CD8-positive, alpha-beta T cell (primary cell): ENCODE measurements at regions of chr10 and their contacts with region 1.

Region 1: GRCh38 chr10:75226656-75227055 is 9.1 kb downstream of the COMTD1 start:
- DNase-seq: no peak
- ATAC-seq: no peak
- H3K4me3 ChIP-seq: no peak overlapping the region
- H3K4me3 Mint-ChIP-seq: no peak overlapping the region
- H3K27ac ChIP-seq: no peak overlapping the region
- H3K27ac Mint-ChIP-seq: peak overlapping the region; percentile 85
- H3K4me1 ChIP-seq: peaks cover 31% of the 10 kb centered on the region
- H3K4me1 Mint-ChIP-seq: peaks cover 67% of the 10 kb centered on the region
- H3K27me3 ChIP-seq: no peaks in the 10 kb centered on the region
- H3K27me3 Mint-ChIP-seq: no peaks in the 10 kb centered on the region
- CTCF ChIP-seq: no peak

Region 2: GRCh38 chr10:75210282-75211006 is 16.2 kb before region 1 on chr10 and contains the start of gene VDAC2:
- CTCF ChIA-PET with region 1: interaction called, 115 read pairs
- POLR2A ChIA-PET with region 1: interaction called, 55 read pairs
- intact Hi-C with region 1: loop called (anchors 1 kb)
- DNase-seq: peak; percentile 93 to 99 (median 96)
- ATAC-seq: peak; percentile 89
- H3K4me3 ChIP-seq: peak within 1 kb of the TSS; percentile 90 to 93
- H3K4me3 Mint-ChIP-seq: peak within 1 kb of the TSS; percentile 97
- H3K27ac ChIP-seq: peak within 1 kb of the TSS; percentile 99 to 100
- H3K27ac Mint-ChIP-seq: peak within 1 kb of the TSS; percentile 100
- H3K4me1 ChIP-seq: peaks cover 28% of the 10 kb centered on the region
- H3K4me1 Mint-ChIP-seq: peaks cover 26% of the 10 kb centered on the region
- H3K27me3 ChIP-seq: no peaks in the 10 kb centered on the region
- H3K27me3 Mint-ChIP-seq: no peaks in the 10 kb centered on the region
- CTCF ChIP-seq: no peak
- total RNA-seq, gene VDAC2: 184 to 187 TPM

Region 3: GRCh38 chr10:75708060-75708459 is 481.4 kb after region 1 on chr10:
- CTCF ChIA-PET with region 1: no interaction called
- POLR2A ChIA-PET with region 1: no interaction called
- intact Hi-C with region 1: no loop called
- DNase-seq: no peak
- ATAC-seq: no peak
- H3K4me3 ChIP-seq: no peak overlapping the region
- H3K4me3 Mint-ChIP-seq: no peak overlapping the region
- H3K27ac ChIP-seq: no peak overlapping the region
- H3K27ac Mint-ChIP-seq: no peak overlapping the region
- H3K4me1 ChIP-seq: no peaks in the 10 kb centered on the region
- H3K4me1 Mint-ChIP-seq: no peaks in the 10 kb centered on the region
- H3K27me3 ChIP-seq: peaks cover 0 to 2% of the 10 kb centered on the region in 2 experiments
- H3K27me3 Mint-ChIP-seq: peaks cover 23% of the 10 kb centered on the region
- CTCF ChIP-seq: no peak